Activated B cell treated with CpG ODN at 0.5 μM for 24 hours (primary cell): ENCODE measurements at regions of chr7 and their contacts with region 1.

Region 1: DNA sequence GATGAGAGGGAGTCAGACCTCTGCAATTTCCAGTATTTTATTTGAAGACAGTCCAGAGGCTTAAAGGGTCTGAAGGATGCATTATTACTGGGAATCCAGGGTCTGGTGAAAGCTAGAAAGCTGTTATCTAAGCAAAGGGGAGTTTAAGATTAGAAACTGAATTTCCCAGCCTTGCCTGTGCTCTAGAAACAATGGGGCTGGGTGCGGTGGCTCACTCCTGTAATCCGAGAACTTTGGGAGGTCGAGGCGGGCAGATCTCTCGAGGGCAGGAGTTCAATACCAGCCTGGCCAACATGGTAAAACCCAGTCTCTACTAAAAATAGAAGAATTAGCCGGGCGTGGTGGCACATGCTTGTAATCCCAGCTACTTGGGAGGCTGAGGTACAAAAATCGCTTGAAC is 71.5 kb upstream of the ANLN start:
- DNase-seq: no peak
- ATAC-seq: no peak
- H3K4me3 Mint-ChIP-seq: no peak overlapping the region
- H3K27ac Mint-ChIP-seq: no peak overlapping the region
- H3K4me1 Mint-ChIP-seq: peaks cover 2% of the 10 kb centered on the region
- H3K27me3 Mint-ChIP-seq: peaks cover 5% of the 10 kb centered on the region
- CTCF ChIP-seq: no peak

Region 2: GRCh38 chr7:35985126-35985754 is 332.9 kb before region 1 on chr7:
- CTCF ChIA-PET with region 1: interaction called, 25 read pairs
- POLR2A ChIA-PET with region 1: no interaction called
- intact Hi-C with region 1: loop called (anchors 1 kb)
- DNase-seq: peak; percentile 56
- ATAC-seq: peak; percentile 100
- H3K4me3 Mint-ChIP-seq: no peak overlapping the region
- H3K27ac Mint-ChIP-seq: no peak overlapping the region
- H3K4me1 Mint-ChIP-seq: no peaks in the 10 kb centered on the region
- H3K27me3 Mint-ChIP-seq: peaks cover 2% of the 10 kb centered on the region
- CTCF ChIP-seq: no peak

Region 3: GRCh38 chr7:36250317-36250716 is 67.8 kb before region 1 on chr7:
- CTCF ChIA-PET with region 1: no interaction called
- POLR2A ChIA-PET with region 1: no interaction called
- intact Hi-C with region 1: no loop called
- DNase-seq: no peak
- ATAC-seq: no peak
- H3K4me3 Mint-ChIP-seq: no peak overlapping the region
- H3K27ac Mint-ChIP-seq: no peak overlapping the region
- H3K4me1 Mint-ChIP-seq: no peaks in the 10 kb centered on the region
- H3K27me3 Mint-ChIP-seq: no peaks in the 10 kb centered on the region
- CTCF ChIP-seq: no peak

Region 4: GRCh38 chr7:36547416-36547815 is 229.3 kb after region 1 on chr7:
- CTCF ChIA-PET with region 1: no interaction called
- POLR2A ChIA-PET with region 1: no interaction called
- intact Hi-C with region 1: no loop called
- DNase-seq: no peak
- ATAC-seq: no peak
- H3K4me3 Mint-ChIP-seq: no peak overlapping the region
- H3K27ac Mint-ChIP-seq: no peak overlapping the region
- H3K4me1 Mint-ChIP-seq: no peaks in the 10 kb centered on the region
- H3K27me3 Mint-ChIP-seq: no peaks in the 10 kb centered on the region
- CTCF ChIP-seq: no peak